Activated CD8-positive, alpha-beta T cell treated with anti-CD3 and anti-CD28 coated beads, Interleukin-2, amount 10 ng/mL, durations not matched to agents 7 days and 5 days (primary cell): ENCODE measurements at regions of chr15 and their contacts with region 1.

Region 1: GRCh38 chr15:78299101-78299930 is at the start of gene SKIC8:
- DNase-seq: peak; percentile 92
- ATAC-seq: peak; percentile 98
- H3K4me3 Mint-ChIP-seq: peak within 1 kb of the TSS; percentile 100
- H3K27ac Mint-ChIP-seq: peak within 1 kb of the TSS; percentile 94
- H3K4me1 Mint-ChIP-seq: peaks cover 28% of the 10 kb centered on the region
- H3K27me3 Mint-ChIP-seq: no peaks in the 10 kb centered on the region
- total RNA-seq, gene SKIC8: 47.4 to 50.3 TPM

Region 2: DNA sequence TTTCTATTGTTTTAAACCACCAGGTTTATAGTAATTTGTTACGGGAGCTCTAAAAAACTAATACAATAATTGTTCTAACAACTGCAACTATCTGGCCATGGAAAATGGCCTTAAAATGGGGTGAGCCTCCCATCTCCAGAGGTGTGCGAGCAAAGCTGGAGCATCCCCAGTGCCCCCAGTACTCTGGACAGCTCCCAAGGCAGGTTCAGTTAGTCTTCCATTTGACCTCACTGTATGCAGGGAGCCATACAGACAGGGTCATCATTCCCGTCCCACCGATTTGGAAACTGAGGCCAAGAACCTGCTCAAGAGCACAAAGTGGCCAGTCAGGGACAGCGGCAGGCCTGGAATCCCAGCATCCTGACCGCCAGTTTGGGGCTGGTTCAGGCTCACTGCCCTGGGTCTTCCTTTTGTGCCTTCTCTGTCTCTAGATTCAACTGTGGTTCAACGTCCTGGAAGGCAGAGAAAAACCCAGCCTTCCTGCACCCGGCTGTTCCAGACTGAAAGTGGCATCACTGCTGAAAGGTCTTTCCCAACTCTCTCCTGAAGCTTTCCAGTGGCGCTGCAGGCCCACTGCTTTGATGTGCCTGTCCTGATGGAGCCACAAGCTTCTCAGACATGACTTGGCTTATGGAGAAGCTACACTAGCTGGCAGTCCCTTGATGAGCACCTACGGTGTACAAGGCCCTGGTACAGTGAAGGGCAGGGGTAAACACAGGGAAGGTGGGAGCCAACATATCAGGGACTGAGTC is 590.0 kb before region 1 on chr15:
- CTCF ChIA-PET with region 1: no interaction called
- POLR2A ChIA-PET with region 1: no interaction called
- DNase-seq: no peak
- ATAC-seq: no peak
- H3K4me3 Mint-ChIP-seq: no peak overlapping the region
- H3K27ac Mint-ChIP-seq: no peak overlapping the region
- H3K4me1 Mint-ChIP-seq: no peaks in the 10 kb centered on the region
- H3K27me3 Mint-ChIP-seq: no peaks in the 10 kb centered on the region

Region 3: DNA sequence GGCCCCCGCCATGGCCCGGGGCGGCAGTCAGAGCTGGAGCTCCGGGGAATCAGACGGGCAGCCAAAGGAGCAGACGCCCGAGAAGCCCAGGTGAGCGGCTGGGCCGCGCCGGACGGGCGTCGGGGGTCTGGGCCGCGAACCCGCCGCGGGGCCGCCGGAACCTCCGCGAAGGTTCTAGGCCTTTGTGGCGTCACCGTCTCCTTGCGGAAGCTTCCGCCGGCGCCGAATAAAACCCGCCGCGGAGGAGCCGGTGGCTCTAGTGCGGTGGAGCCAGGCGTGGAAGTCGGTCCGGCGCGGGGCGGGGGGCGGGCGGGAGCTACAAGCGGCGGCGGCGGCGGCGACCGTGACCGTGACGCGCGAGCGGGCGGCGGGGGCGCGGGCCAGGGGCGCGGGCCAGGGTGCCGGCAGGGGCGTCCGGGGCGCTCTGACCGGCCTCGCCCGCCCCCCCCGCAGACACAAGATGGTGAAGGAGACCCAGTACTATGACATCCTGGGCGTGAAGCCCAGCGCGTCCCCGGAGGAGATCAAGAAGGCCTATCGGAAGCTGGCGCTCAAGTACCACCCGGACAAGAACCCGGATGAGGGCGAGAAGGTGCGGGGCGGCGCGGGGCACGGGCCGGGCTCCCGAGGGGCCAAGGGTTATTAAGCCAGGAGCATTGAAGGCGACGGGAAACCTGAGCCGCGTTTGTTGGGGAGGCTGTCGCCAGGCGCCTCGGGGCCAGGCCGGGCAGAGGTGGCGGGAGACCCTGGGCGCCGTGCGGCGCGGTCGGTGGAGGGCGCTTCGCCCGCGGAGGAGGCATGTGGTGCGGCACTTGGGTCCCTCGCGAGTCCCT is 34.8 kb before region 1 on chr15 and contains the start of gene DNAJA4:
- CTCF ChIA-PET with region 1: interaction called, 6 read pairs
- POLR2A ChIA-PET with region 1: interaction called, 27 read pairs
- DNase-seq: peak; percentile 73
- ATAC-seq: peak; percentile 76
- H3K4me3 Mint-ChIP-seq: peak within 1 kb of the TSS; percentile 73
- H3K27ac Mint-ChIP-seq: peak within 1 kb of the TSS; percentile 82
- H3K4me1 Mint-ChIP-seq: peaks cover 29% of the 10 kb centered on the region
- H3K27me3 Mint-ChIP-seq: peaks cover 2% of the 10 kb centered on the region
- total RNA-seq, gene DNAJA4: 29.7 TPM

Region 4: DNA sequence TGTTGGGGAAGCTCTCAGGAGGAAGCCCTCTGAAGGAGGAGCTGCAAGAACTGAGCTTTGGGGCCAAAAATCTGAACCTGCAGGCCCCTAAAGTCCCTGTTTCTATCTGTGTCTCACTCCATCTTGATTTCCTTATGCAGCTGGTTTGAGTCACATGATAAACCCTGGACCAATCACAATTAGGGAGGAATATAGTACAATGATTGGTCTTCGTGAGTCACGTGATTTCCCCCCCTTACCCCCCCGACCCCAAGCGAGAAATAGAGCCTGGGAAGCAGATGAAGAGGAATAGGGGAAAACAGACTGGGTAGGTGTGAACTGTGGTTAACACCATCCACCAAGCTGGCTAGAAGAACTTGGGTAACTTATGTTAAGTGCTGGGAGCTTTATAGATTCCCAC is 53.8 kb after region 1 on chr15:
- CTCF ChIA-PET with region 1: no interaction called
- POLR2A ChIA-PET with region 1: no interaction called
- DNase-seq: no peak
- ATAC-seq: no peak
- H3K4me3 Mint-ChIP-seq: no peak overlapping the region
- H3K27ac Mint-ChIP-seq: no peak overlapping the region
- H3K4me1 Mint-ChIP-seq: no peaks in the 10 kb centered on the region
- H3K27me3 Mint-ChIP-seq: peaks cover 13% of the 10 kb centered on the region

Region 5: DNA sequence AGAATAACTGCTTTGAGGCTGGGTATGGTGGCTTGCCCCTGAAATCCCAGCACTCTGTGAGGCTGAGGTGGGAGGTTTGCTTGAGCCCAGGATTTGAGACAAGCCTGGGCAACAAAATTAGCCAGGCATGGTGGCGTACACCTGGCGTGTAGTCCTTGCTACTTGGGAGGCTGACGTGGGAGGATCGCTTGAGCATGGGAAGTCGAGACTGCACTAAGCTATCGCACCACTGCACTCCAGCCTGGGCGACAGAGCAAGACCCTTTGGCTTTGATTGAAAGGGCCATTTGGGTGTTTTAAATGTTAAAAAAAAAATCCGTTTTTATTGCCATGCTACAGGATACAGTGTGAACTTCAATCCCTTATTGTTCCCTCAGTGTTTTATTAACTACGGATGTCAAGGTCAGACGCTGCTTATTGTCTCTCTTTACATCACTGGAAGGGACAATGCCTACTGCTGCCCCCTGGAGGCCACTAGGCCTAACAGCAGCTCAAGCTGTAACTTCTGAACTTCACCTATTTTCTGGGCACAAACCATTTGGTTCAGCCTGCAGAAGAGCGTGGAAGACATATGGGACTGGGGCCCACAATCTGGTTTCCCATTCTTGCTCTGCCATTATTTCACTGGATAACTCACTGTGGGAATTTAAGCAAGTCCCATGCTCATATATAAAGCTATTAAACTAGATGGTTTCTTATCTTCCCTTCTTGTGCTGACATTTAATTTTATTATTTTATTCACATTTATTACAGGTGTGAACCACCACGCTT is 123.4 kb after region 1 on chr15:
- CTCF ChIA-PET with region 1: interaction called, 20 read pairs
- POLR2A ChIA-PET with region 1: interaction called, 5 read pairs
- DNase-seq: peak; percentile 77
- ATAC-seq: peak; percentile 67
- H3K4me3 Mint-ChIP-seq: no peak overlapping the region
- H3K27ac Mint-ChIP-seq: no peak overlapping the region
- H3K4me1 Mint-ChIP-seq: peaks cover 21% of the 10 kb centered on the region
- H3K27me3 Mint-ChIP-seq: peaks cover 18% of the 10 kb centered on the region